ENCODE measurements at regions of chr9 and their contacts with region 1.

Region 1: DNA sequence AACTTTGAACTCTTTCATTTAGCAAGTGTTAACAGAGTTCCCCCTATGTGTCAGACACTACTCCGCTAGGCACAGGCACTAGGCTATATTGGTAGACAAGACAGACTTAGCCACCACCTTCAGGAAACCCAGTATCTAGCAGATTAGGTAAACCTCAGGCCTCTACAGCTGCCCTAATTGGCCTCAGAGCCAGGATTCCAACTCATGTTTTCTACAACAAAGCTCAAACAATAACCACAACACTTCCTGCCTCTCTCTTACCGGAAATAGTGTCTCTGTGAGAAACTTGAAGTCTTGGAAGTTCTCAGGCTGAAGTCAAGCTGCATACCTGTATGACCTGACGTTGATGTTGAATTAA is 116.6 kb upstream of the SLC44A1 start:
- DNase-seq: peak in 8 of 9 donors; percentile 41 to 92 (median 90)
- ATAC-seq: peak; percentile 99
- H3K4me3 ChIP-seq: no peak overlapping the region
- H3K4me3 Mint-ChIP-seq: peak overlapping the region; percentile 35 to 84 (median 74)
- H3K27ac ChIP-seq: no peak overlapping the region
- H3K27ac Mint-ChIP-seq: peak overlapping the region; percentile 42 to 95 (median 78)
- H3K4me1 ChIP-seq: peaks cover 31 to 55% of the 10 kb centered on the region in 2 donors
- H3K4me1 Mint-ChIP-seq: peaks cover 36 to 67% (median 63%) of the 10 kb centered on the region in 7 donors
- H3K27me3 ChIP-seq: no peaks in the 10 kb centered on the region
- H3K27me3 Mint-ChIP-seq: peaks cover 0 to 35% (median 0%) of the 10 kb centered on the region in 5 donors

Region 2: GRCh38 chr9:104863180-104863883 is 264.5 kb before region 1 on chr9:
- CTCF ChIA-PET with region 1: no interaction called
- POLR2A ChIA-PET with region 1: no interaction called
- intact Hi-C with region 1: loop called in 1 of 2 experiments (anchors 1 kb)
- DNase-seq: peak in 8 of 9 donors; percentile 25 to 69 (median 57)
- ATAC-seq: peak; percentile 80
- H3K4me3 ChIP-seq: no peak overlapping the region
- H3K4me3 Mint-ChIP-seq: no peak overlapping the region
- H3K27ac ChIP-seq: no peak overlapping the region
- H3K27ac Mint-ChIP-seq: peak overlapping the region in 2 of 9 donors; percentile 2 to 62
- H3K4me1 ChIP-seq: no peaks in the 10 kb centered on the region
- H3K4me1 Mint-ChIP-seq: peaks cover 0 to 18% (median 7%) of the 10 kb centered on the region in 7 donors
- H3K27me3 ChIP-seq: no peaks in the 10 kb centered on the region
- H3K27me3 Mint-ChIP-seq: no peaks in the 10 kb centered on the region

Region 3: DNA sequence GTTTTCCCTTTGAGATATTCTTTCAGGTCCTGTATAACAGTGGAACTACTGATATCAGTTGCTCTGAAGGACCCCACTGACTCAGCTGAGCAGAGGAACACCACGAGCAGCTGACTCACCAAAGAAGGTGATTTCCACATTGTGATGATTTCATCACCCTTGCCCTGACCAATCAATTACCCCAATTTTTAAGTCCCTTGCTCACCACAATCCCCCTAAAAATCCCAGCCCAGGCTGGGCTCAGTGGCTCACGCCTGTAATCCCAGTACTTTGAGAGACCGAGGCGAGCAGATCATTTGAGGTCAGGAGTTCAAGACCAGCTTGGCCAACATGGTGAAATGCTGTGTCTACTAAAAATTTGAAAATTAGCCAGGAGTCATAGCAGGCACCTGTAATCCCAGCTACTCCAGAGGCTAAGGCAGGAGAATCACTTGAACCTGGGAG is 74.6 kb before region 1 on chr9:
- CTCF ChIA-PET with region 1: no interaction called
- POLR2A ChIA-PET with region 1: no interaction called
- intact Hi-C with region 1: loop called in 1 of 2 experiments (anchors 5 kb)
- DNase-seq: peak in 1 of 9 donors; percentile 27
- ATAC-seq: peak; percentile 72
- H3K4me3 ChIP-seq: no peak overlapping the region
- H3K4me3 Mint-ChIP-seq: peak overlapping the region in 5 of 10 donors; percentile 27 to 73 (median 45)
- H3K27ac ChIP-seq: no peak overlapping the region
- H3K27ac Mint-ChIP-seq: peak overlapping the region in 7 of 9 donors; percentile 49 to 93 (median 78)
- H3K4me1 ChIP-seq: peaks cover 0 to 24% of the 10 kb centered on the region in 2 donors
- H3K4me1 Mint-ChIP-seq: peaks cover 18 to 43% (median 32%) of the 10 kb centered on the region in 7 donors
- H3K27me3 ChIP-seq: no peaks in the 10 kb centered on the region
- H3K27me3 Mint-ChIP-seq: no peaks in the 10 kb centered on the region

Region 4: DNA sequence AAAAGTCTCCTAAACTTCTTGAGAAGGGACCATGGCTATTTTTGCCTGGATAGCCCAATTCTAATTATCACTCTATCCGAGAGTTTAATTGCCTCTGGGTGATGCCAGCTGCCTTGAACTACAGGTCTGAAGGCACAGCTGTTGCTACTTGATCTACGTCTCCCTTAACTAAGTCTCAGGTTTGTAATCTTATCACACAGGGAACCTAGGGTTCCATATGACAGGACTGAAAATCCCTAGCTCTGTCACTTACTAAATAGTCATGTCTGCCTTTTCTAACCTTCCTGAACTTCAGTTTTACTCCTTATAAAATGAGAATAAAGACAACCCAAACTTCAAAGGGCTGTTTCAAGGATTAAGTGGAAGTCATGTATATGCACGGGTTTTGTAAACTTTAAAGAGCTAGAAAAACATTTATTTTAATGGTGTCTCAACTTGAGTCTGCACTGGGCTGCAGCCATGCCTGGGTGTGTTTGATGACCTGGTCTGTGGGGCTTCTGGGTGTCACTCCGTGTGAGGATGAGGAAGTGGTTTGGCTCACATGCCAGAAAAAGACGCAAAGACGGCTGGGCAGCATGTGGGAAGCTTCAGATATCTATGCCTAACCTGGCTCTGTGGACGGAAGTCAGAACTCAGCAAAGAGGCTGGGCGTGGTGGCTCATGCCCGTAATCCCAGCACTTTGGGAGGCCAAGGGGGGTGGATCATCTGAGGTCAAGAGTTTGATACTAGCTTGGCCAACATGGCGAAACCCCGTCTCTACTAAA is 12.7 kb before region 1 on chr9:
- CTCF ChIA-PET with region 1: no interaction called
- POLR2A ChIA-PET with region 1: interaction called, 3 read pairs
- intact Hi-C with region 1: loop called in 1 of 2 experiments (anchors 1 kb)
- DNase-seq: peak in 3 of 9 donors; percentile 10 to 30 (median 29)
- ATAC-seq: peak; percentile 93
- H3K4me3 ChIP-seq: no peak overlapping the region
- H3K4me3 Mint-ChIP-seq: peak overlapping the region; percentile 59 to 87 (median 76)
- H3K27ac ChIP-seq: no peak overlapping the region
- H3K27ac Mint-ChIP-seq: peak overlapping the region in 6 of 9 donors; percentile 29 to 84 (median 38)
- H3K4me1 ChIP-seq: peaks cover 7 to 27% of the 10 kb centered on the region in 2 donors
- H3K4me1 Mint-ChIP-seq: peaks cover 24 to 51% (median 38%) of the 10 kb centered on the region in 7 donors
- H3K27me3 ChIP-seq: no peaks in the 10 kb centered on the region
- H3K27me3 Mint-ChIP-seq: peaks cover 0 to under 1% (median 0%) of the 10 kb centered on the region in 5 donors

Region 5: GRCh38 chr9:105157130-105157583 is 29.3 kb after region 1 on chr9:
- CTCF ChIA-PET with region 1: interaction called, 3 read pairs
- POLR2A ChIA-PET with region 1: interaction called, 3 read pairs
- intact Hi-C with region 1: loop called (anchors 1 to 2 kb)
- DNase-seq: peak in 7 of 9 donors; percentile 18 to 53 (median 45)
- ATAC-seq: peak; percentile 89
- H3K4me3 ChIP-seq: no peak overlapping the region
- H3K4me3 Mint-ChIP-seq: no peak overlapping the region
- H3K27ac ChIP-seq: no peak overlapping the region
- H3K27ac Mint-ChIP-seq: peak overlapping the region in 1 of 9 donors; percentile 60
- H3K4me1 ChIP-seq: peaks cover 0 to 7% of the 10 kb centered on the region in 2 donors
- H3K4me1 Mint-ChIP-seq: peaks cover 12 to 34% (median 22%) of the 10 kb centered on the region in 7 donors
- H3K27me3 ChIP-seq: no peaks in the 10 kb centered on the region
- H3K27me3 Mint-ChIP-seq: peaks cover 0 to 6% (median 0%) of the 10 kb centered on the region in 5 donors

Region 6: DNA sequence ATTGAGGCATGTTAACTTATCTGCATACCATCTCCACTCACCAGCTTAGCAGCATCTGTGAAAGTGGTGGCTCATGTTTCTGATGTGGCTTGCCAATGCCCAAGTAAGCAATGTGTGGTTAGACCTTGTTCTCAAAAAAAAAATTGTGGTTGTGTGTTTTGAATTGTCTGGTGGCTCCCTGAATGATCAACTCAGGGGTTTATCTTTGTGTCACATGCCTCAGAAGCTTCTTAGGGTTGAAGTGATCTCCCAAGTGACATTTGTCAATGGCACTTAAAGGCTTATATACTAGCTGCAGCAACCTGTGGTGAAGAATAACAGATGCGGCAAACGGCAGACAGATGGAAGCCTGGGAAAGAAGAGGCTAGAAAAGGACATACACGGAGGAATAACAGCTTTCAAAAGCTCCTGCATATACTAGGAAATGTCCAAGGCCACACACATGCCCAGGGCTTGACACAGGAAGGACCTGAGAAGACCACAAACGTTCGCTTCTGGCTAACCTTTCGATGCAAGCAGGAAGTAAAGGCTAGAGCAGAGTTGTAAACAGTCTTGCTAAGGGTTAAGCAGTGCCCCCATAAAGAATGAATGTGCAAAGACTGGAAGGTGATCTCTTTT is 277.8 kb after region 1 on chr9:
- CTCF ChIA-PET with region 1: no interaction called
- POLR2A ChIA-PET with region 1: interaction called, 3 read pairs
- intact Hi-C with region 1: loop called (anchors 1 kb)
- DNase-seq: peak in 8 of 9 donors; percentile 61 to 92 (median 90)
- ATAC-seq: peak; percentile 94
- H3K4me3 ChIP-seq: peak overlapping the region; percentile 1
- H3K4me3 Mint-ChIP-seq: peak overlapping the region in 9 of 10 donors; percentile 63 to 84 (median 75)
- H3K27ac ChIP-seq: no peak overlapping the region
- H3K27ac Mint-ChIP-seq: peak overlapping the region in 8 of 9 donors; percentile 11 to 96 (median 90)
- H3K4me1 ChIP-seq: peaks cover 19 to 22% of the 10 kb centered on the region in 2 donors
- H3K4me1 Mint-ChIP-seq: peaks cover 20 to 42% (median 34%) of the 10 kb centered on the region in 7 donors
- H3K27me3 ChIP-seq: peaks cover 0 to 6% of the 10 kb centered on the region in 2 donors
- H3K27me3 Mint-ChIP-seq: peaks cover 34 to 82% (median 59%) of the 10 kb centered on the region in 5 donors